Posterior vena cava (tissue), 2 donors: ENCODE measurements at regions of chr17 and their contacts with region 1.

Region 1: GRCh38 chr17:11779892-11780291 is 181.6 kb downstream of the DNAH9 start:
- DNase-seq: no peak

Region 2: DNA sequence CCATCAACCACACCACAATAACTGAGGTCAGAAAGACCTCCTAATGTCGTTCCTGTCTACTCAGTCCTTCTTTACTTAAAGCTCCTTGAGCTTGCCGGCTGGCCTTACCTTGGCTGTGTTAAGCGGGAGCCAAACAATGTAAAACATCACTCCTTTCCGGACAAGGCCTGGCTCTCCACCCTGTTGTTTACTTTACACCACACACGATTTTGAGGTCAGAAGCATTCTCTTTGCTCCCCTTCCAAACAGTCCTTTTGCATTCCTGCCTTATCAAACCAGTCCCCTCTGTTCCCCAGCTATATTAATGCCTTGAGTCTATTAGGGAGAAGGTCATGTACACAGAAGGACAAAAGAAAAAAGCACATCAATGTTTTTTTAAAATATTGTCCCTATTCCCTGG is 558.2 kb before region 1 on chr17:
- intact Hi-C with region 1: no loop called
- DNase-seq: no peak

Region 3: DNA sequence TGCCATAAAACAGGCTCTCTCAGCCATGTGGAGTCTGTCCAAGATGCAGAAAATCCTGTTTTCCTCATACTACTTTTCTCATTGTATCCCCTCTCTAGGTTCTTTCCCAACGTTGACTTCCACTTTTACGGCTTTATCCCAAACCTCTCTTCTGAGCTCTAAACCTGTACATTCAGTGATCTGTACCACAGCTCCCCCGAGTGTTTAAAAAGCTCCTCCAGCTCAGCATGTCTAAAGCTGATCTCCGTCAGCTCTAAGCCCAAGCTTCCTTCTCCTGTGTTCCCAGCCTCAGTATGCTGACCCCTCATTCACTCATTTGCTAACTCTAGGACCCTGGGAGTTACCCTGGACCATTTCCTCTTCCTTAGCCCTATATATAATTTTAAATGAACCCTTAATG is 37.0 kb before region 1 on chr17:
- intact Hi-C with region 1: no loop called
- DNase-seq: no peak

Region 4: DNA sequence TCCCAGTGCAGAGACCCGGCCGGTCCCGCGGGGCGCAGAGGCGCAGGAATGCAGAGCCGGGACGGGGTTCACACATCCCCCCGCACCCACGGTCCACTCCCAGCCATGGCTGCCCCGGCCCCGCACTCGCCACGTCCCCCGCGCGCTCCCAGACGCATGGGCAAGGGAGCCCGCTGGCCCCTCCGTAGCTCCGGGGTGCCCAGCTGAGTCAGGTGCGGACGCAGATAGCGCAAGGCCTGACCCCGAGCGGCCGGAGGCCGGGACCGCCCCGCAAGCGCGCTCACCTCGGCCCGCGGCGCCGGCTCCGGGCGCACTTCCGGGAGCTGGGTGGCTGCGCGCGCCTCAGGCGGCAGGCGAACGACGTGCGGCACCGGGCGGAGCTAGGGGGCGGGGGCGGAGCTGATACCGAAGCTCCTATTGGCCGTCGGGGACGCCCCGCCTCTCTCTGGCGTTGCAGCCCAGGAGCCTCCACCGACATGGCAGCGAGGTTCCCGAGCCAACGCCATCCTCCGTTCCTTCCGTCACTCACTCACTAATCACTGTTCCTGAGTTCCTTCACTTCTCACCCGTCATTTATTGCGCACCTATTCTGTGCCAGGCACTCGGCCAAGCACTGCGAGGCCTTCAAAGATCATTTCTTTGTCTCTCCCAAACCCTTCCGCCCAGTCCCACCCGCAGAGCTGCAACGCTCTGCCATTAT is 217.4 kb after region 1 on chr17 and contains the start of gene ZNF18:
- intact Hi-C with region 1: no loop called
- DNase-seq: peak; percentile 99
- total RNA-seq, gene ZNF18: 6.5 TPM

Region 5: DNA sequence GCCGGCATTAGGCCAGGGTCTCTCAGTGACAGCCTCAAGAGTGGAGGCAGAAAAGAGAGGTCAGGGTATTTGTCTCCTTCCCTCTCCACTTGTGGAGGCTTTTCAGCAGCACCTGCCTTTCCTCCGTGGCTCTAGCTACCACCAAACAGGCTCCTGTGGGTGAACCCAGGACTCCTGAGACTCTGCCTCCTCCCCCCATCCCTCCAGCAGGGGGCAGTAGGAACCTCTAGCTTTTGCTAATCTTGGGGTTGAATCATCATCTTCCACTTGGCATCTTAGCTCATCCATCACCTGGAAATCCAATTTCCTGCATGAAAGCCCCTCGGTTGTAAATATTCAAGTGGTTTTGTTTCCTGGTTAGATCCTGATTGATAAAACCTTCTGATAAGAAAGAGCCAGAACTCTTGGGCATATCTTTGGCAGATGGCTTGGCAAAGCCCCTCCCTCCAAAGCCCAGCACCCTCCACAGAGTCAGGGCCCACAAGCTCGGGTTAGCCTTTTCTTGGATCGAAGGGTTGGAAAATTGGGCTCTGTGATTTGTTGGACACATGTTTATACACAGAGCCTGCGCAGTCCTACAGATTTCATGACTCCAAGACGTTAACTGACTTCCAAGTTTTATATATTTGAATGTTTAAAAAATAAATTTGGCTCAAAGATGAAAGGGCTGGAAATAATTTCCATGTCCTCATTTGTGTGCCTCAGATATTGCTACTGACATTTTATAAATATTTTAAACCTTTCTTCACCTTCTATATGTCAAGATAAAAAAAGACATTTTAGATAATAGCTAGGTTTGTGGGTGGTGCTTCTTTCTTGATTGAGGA is 562.9 kb after region 1 on chr17:
- intact Hi-C with region 1: loop called in 1 of 2 experiments (anchors 5 kb)
- DNase-seq: no peak